ENCODE measurements at regions of chr16 and their contacts with region 1.

Region 1: GRCh38 chr16:22424161-22424937 is 49.9 kb upstream of the CDR2 start:
- DNase-seq: peak; percentile 67 to 90
- ATAC-seq: peak; percentile 91 to 92
- H3K4me3 ChIP-seq: peak overlapping the region; percentile 38 to 64 (median 49)
- H3K27ac ChIP-seq: peak overlapping the region; percentile 80 to 94 (median 88)
- H3K4me1 ChIP-seq: peaks cover 17 to 19% of the 10 kb centered on the region in 2 donors
- H3K27me3 ChIP-seq: no peaks in the 10 kb centered on the region
- CTCF ChIP-seq: no peak
- POLR2A ChIP-seq: no peak

Region 2: GRCh38 chr16:22284637-22285036 is 139.7 kb before region 1 on chr16:
- in situ Hi-C with region 1: no loop called
- intact Hi-C with region 1: no loop called
- DNase-seq: no peak
- ATAC-seq: no peak
- H3K4me3 ChIP-seq: no peak overlapping the region
- H3K27ac ChIP-seq: no peak overlapping the region
- H3K4me1 ChIP-seq: no peaks in the 10 kb centered on the region
- H3K27me3 ChIP-seq: no peaks in the 10 kb centered on the region
- CTCF ChIP-seq: no peak
- POLR2A ChIP-seq: no peak

Region 3: DNA sequence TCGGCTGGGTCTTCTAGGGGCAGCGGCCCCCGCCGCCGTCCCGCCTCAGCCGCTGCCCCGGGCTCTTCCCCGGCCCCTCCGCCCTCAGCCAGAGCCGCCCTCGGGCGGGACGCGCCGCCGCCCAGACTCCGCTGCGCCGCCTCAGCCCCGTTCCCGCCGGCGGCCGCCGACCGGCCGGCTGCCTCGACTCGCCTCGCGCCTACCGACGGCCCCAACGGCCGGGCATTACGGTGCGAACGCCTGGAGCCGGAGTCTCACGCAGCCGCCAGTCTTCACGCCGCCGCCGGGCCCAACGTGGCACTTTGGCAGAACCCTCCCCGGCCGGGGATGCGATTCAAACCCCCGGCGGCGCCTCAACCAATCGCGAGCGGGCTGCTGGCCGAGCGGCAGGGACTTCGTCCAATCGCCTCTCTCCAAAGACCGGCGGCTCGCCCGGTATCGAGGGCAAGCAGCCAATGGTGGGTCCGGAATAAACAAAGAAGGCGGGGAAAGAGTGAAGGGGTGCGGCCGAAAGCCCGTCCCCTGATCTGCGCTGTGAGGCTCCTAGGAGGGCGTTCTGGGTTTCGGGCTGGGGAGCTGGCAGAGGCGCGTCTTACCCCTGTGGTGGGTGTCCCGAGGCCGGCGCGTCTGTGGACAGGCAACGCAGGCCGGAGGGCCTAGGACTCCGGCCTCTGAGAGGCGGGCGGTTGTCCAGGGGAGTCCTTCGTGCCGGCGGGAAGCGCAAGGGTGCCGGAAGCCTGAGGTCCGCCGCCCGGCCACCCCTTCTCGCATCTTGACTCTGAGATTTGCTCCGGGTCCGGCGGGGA is 49.8 kb before region 1 on chr16 and contains the start of gene CDR2:
- in situ Hi-C with region 1: no loop called
- intact Hi-C with region 1: loop called (anchors 5 kb)
- DNase-seq: peak; percentile 97
- ATAC-seq: peak; percentile 97
- H3K4me3 ChIP-seq: peak within 1 kb of the TSS; percentile 71 to 87 (median 78)
- H3K27ac ChIP-seq: peak within 1 kb of the TSS; percentile 63 to 76 (median 70)
- H3K4me1 ChIP-seq: peaks cover 21 to 25% of the 10 kb centered on the region in 2 donors
- H3K27me3 ChIP-seq: no peaks in the 10 kb centered on the region
- CTCF ChIP-seq: no peak
- POLR2A ChIP-seq: peak; percentile 70 to 88
- total RNA-seq, gene CDR2: 4.1 to 7.6 (median 7.3) TPM